ENCODE measurements at regions of chr12 and their contacts with region 1.

Region 1: GRCh38 chr12:132066345-132066685 is 77.8 kb downstream of the DDX51 start:
- DNase-seq: no peak
- ATAC-seq: no peak
- H3K4me3 ChIP-seq: no peak overlapping the region
- H3K27ac ChIP-seq: no peak overlapping the region
- H3K4me1 ChIP-seq: peaks cover 0 to 6% (median 0%) of the 10 kb centered on the region in 9 donors
- H3K27me3 ChIP-seq: no peaks in the 10 kb centered on the region
- CTCF ChIP-seq: no peak

Region 2: DNA sequence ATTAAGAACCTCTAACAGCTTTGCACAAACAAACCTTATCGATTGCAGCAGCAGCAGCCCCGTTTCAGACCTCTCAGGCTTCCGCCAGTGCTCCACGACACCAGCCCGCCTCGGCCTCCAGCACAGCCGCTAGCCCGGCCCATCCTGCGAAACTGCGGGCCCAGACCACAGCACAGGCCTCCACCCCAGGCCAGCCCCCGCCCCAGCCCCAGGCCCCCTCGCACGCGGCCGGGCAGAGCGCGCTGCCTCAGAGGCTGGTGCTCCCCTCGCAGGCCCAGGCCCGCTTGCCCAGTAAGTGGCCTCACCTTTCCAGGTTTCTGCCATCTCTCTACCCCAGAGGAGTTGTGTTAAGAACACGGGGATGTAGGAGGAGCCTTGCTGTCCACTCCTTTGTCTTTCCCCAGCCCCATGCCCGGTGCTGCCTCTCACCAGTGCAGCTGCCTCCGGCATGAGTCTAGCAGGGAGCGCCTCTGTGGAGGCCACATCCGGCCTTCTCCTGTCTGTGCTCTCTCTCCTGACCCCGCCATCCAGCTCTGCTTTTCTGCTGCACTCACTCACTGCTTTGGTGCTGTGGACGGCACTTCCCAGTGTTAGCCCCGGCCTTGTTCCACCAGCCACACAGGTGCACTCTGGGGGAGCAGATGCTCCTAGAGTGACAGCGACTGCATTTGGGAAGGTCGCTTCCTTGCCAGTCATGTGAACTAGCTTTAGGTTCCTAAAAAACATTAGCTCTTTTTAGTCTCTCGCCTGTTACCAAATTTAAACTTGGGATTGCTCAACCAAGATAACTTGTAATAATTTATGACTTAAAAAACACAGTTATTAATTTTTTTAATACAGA is 45.1 kb before region 1 on chr12:
- intact Hi-C with region 1: loop called in 1 of 10 experiments (anchors 5 kb)
- DNase-seq: no peak
- ATAC-seq: peak in 1 of 8 donors; percentile 50
- H3K4me3 ChIP-seq: no peak overlapping the region
- H3K27ac ChIP-seq: no peak overlapping the region
- H3K4me1 ChIP-seq: peaks cover 0 to 4% (median 0%) of the 10 kb centered on the region in 9 donors
- H3K27me3 ChIP-seq: no peaks in the 10 kb centered on the region
- CTCF ChIP-seq: no peak

Region 3: GRCh38 chr12:132475304-132476037 is 409.2 kb after region 1 on chr12:
- intact Hi-C with region 1: no loop called
- DNase-seq: no peak
- ATAC-seq: peak in 1 of 8 donors; percentile 9
- H3K4me3 ChIP-seq: no peak overlapping the region
- H3K27ac ChIP-seq: no peak overlapping the region
- H3K4me1 ChIP-seq: peaks cover 0 to 7% (median 0%) of the 10 kb centered on the region in 9 donors
- H3K27me3 ChIP-seq: peaks cover 0 to 14% (median 7%) of the 10 kb centered on the region in 7 donors
- CTCF ChIP-seq: no peak

Measured in heart right ventricle (tissue), 16 donors.